HepG2 (cell line): ENCODE measurements at regions of chr6 and their contacts with region 1.

Region 1: DNA sequence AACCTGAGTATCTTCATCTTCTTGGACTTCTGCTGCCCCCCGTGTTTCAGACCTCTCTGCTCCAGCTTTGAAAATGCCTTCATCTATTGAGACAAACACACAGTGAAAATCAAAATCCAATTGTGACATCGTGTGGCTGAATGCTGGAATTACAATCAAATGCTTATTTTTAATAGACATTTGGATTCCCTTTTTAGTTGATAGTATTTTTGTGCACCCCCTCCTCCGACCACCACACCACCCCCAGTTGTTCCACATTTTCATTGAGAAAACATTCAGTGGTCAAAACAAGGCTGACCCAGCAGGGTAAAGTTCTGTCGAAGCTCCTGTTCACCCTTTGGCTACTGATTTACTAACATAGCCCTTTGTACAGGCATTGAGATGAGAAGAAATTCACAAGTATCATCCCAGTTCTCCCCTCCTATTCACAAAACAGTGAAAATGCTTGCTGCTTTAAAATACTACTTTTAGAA is 79.0 kb downstream of the NRSN1 start:
- DNase-seq: peak; percentile 59
- ATAC-seq: peak; percentile 99
- H3K4me3 ChIP-seq: peak overlapping the region in 1 of 3 experiments; percentile 18; a peak in 1 of 6 replicates
- H3K27ac ChIP-seq: peak overlapping the region; percentile 53
- H3K4me1 ChIP-seq: peaks cover 40% of the 10 kb centered on the region
- H3K27me3 ChIP-seq: no peaks in the 10 kb centered on the region
- CTCF ChIP-seq: peak; percentile 80
- EP300 ChIP-seq: 0 out of 4 replicates have a peak, but pooled peaks of 1 of the 2 experiments have one; percentile 3
- POLR2A ChIP-seq: no peak
- RAD21 ChIP-seq: peak; percentile 85

Region 2: DNA sequence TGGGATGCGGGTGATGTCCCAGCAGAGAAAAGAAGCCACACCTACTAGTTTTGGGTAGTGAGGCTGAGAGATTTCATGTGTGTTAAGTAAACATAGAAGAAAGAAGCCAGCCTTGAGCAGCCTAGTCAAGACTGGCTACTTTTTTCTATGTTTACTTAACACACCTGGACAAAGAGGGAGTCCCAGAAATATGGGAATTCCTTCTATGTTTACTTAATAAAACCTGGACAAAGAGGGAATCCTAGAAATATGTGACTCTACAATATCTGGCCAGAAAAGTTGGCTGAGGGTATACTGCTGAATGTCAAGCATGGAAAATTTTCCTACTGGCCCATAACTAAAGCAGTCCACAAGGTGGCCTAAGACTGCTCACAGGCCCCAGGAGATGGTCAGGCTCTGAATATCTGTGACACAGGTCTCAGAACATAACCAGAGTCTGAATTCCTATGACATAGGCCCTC is 657.3 kb before region 1 on chr6:
- CTCF ChIA-PET with region 1: no interaction called
- POLR2A ChIA-PET with region 1: no interaction called
- in situ Hi-C with region 1: no loop called
- intact Hi-C with region 1: loop called (anchors 5 kb)
- DNase-seq: peak; percentile 3
- ATAC-seq: peak; percentile 91
- H3K4me3 ChIP-seq: no peak overlapping the region
- H3K27ac ChIP-seq: no peak overlapping the region
- H3K4me1 ChIP-seq: no peaks in the 10 kb centered on the region
- H3K27me3 ChIP-seq: no peaks in the 10 kb centered on the region
- CTCF ChIP-seq: peak; percentile 41
- EP300 ChIP-seq: no peak
- POLR2A ChIP-seq: no peak
- RAD21 ChIP-seq: no peak

Region 3: GRCh38 chr6:24126586-24127192 is 78.4 kb before region 1 on chr6:
- CTCF ChIA-PET with region 1: no interaction called
- POLR2A ChIA-PET with region 1: no interaction called
- in situ Hi-C with region 1: no loop called
- intact Hi-C with region 1: loop called (anchors 5 kb)
- DNase-seq: peak; percentile 85
- ATAC-seq: peak; percentile 88
- H3K4me3 ChIP-seq: peak overlapping the region in 2 of 3 experiments; percentile 30 to 67; a peak in 3 of 6 replicates
- H3K27ac ChIP-seq: no peak overlapping the region
- H3K4me1 ChIP-seq: peaks cover 22% of the 10 kb centered on the region
- H3K27me3 ChIP-seq: no peaks in the 10 kb centered on the region
- CTCF ChIP-seq: no peak
- EP300 ChIP-seq: no peak
- POLR2A ChIP-seq: no peak
- RAD21 ChIP-seq: peak; percentile 51

Region 4: GRCh38 chr6:24147511-24148149 is 57.4 kb before region 1 on chr6:
- CTCF ChIA-PET with region 1: no interaction called
- POLR2A ChIA-PET with region 1: interaction called, 3 read pairs
- in situ Hi-C with region 1: no loop called
- intact Hi-C with region 1: loop called (anchors 2 kb)
- DNase-seq: no peak
- ATAC-seq: no peak
- H3K4me3 ChIP-seq: peak overlapping the region in 1 of 3 experiments; percentile 15; a peak in 1 of 6 replicates
- H3K27ac ChIP-seq: peak overlapping the region; percentile 84
- H3K4me1 ChIP-seq: peaks cover 55% of the 10 kb centered on the region
- H3K27me3 ChIP-seq: no peaks in the 10 kb centered on the region
- CTCF ChIP-seq: no peak
- EP300 ChIP-seq: no peak
- POLR2A ChIP-seq: no peak; a peak in 1 of 4 replicates
- RAD21 ChIP-seq: no peak

Region 5: DNA sequence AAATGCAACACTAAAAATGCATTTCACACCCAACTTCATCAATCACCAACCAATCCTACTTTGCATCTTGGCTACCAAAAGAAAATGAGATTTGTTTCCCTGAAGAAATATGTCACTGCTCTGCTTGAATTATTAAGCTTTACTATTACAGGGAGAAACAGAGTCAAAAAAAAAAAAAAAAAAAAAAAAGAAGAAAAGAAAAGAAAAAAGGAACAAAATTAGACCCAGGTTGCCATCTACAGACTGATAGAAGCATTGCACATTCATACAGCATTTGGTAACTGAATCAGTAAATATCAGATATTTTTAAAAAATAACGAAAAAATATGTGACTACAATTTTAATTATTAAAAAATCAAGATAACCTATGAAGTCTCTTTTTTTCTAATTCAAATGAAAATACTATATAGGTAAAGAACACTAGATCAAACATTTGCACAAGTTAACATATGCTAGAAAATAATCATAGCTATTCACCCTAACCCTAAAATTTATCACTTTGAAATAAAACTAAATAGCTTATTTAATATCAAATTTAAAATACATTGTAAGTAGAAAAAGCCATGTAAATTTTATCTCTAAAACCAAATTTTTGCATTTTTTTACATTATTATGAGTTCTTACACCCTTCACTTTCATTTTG is 69.5 kb after region 1 on chr6:
- CTCF ChIA-PET with region 1: no interaction called
- POLR2A ChIA-PET with region 1: no interaction called
- in situ Hi-C with region 1: no loop called
- intact Hi-C with region 1: loop called (anchors 1 kb)
- DNase-seq: no peak
- ATAC-seq: no peak
- H3K4me3 ChIP-seq: no peak overlapping the region
- H3K27ac ChIP-seq: no peak overlapping the region
- H3K4me1 ChIP-seq: no peaks in the 10 kb centered on the region
- H3K27me3 ChIP-seq: no peaks in the 10 kb centered on the region
- CTCF ChIP-seq: peak; percentile 51
- EP300 ChIP-seq: no peak
- POLR2A ChIP-seq: no peak
- RAD21 ChIP-seq: no peak